ENCODE measurements at regions of chr18 and their contacts with region 1.

Region 1: DNA sequence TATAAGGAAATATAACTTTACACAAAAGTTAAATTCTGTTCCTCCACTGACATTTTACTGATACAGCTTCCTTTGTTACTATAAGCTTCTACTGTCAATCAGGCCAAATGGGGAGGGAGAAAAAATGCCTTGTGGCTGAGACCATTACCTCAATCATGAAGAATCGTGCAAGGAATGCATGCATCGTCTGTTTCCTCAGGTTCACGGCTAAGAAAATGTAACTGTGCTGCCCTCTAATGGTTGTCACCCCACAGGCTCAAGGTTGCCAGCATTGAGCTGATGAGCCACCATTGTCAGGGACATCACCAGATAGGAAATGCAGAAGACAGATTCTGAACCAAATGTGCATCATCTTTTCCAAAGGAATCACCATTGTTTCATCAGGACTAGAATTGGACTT is 426.9 kb downstream of the CDH2 start:
- DNase-seq: peak; percentile 45 to 55
- H3K4me3 ChIP-seq: no peak overlapping the region
- H3K27ac ChIP-seq: no peak overlapping the region
- H3K4me1 ChIP-seq: no peaks in the 10 kb centered on the region
- H3K27me3 ChIP-seq: no peaks in the 10 kb centered on the region
- CTCF ChIP-seq: peak in 4 of 7 experiments; percentile 25 to 65 (median 36)
- EP300 ChIP-seq: no peak
- POLR2A ChIP-seq: no peak

Region 2: DNA sequence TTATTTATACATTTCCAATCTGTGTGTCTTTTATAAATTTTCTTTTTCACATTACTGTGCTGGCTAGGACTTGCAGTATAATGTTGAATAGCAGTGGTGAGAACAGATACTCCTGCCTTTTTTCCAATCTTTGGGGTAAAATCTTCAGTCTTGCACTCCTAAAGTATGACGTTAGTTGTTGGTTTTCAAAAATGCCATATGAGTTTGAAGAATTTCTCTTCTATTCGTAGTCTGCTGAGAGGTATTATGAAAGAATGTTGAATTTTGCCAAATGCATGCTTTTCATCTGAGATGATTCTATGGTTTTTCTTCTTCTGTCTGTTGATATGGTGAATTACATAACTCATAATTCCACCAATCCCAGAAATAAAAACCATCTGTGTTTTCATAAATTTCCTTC is 229.6 kb before region 1 on chr18:
- intact Hi-C with region 1: no loop called
- DNase-seq: no peak
- H3K4me3 ChIP-seq: no peak overlapping the region
- H3K27ac ChIP-seq: no peak overlapping the region
- H3K4me1 ChIP-seq: no peaks in the 10 kb centered on the region
- H3K27me3 ChIP-seq: no peaks in the 10 kb centered on the region
- CTCF ChIP-seq: no peak
- EP300 ChIP-seq: no peak
- POLR2A ChIP-seq: no peak

Region 3: DNA sequence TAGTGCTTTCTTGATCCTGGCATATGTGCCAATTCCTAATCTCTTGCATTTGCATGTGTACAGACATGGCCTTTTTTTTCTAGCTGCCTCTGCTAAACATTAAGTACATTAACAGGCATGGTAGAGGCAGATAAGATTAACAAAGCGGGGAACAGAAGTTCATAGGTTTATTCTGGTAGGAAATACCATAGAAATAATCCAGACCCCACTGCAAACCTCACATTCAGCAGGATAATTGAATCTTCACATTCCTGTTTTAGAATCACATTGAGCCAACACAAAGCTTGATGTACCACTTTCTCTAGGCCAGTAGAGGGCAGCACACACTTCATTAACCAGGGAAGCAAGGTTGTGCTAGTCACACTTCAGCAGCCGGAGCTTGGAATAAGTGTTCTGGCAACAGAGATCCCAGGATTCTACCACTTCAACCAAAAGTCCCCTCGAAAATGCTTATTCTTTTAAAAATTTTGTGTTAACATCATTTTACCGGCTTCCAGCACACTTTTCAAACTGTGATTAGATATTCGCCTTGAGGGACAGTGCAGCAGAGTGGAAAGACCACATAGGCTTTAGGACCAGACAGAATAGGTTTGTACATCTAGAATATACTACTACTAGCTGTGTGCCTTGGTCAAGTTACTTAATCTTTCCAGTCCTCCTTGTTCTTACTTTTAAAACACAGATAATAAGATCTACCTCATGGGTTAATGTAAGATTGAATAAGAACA is 144.7 kb before region 1 on chr18:
- intact Hi-C with region 1: loop called (anchors 10 kb)
- DNase-seq: peak; percentile 66 to 93
- H3K4me3 ChIP-seq: no peak overlapping the region
- H3K27ac ChIP-seq: no peak overlapping the region
- H3K4me1 ChIP-seq: peaks cover 0 to 16% (median 7%) of the 10 kb centered on the region in 4 donors
- H3K27me3 ChIP-seq: no peaks in the 10 kb centered on the region
- CTCF ChIP-seq: peak in 5 of 7 experiments; percentile 59 to 78 (median 71)
- EP300 ChIP-seq: no peak
- POLR2A ChIP-seq: no peak

Region 4: GRCh38 chr18:28019425-28020108 is 269.6 kb after region 1 on chr18:
- intact Hi-C with region 1: no loop called
- DNase-seq: peak in 1 of 2 donors; percentile 11
- H3K4me3 ChIP-seq: no peak overlapping the region
- H3K27ac ChIP-seq: no peak overlapping the region
- H3K4me1 ChIP-seq: peaks cover 0 to 6% (median 2%) of the 10 kb centered on the region in 4 donors
- H3K27me3 ChIP-seq: no peaks in the 10 kb centered on the region
- CTCF ChIP-seq: no peak
- EP300 ChIP-seq: no peak
- POLR2A ChIP-seq: no peak

Measured in stomach (tissue), 19 donors.